Activated naive CD4-positive, alpha-beta T cell treated with anti-CD3 and anti-CD28 coated beads for 36 hours (primary cell): ENCODE measurements at regions of chr12 and their contacts with region 1.

Region 1: DNA sequence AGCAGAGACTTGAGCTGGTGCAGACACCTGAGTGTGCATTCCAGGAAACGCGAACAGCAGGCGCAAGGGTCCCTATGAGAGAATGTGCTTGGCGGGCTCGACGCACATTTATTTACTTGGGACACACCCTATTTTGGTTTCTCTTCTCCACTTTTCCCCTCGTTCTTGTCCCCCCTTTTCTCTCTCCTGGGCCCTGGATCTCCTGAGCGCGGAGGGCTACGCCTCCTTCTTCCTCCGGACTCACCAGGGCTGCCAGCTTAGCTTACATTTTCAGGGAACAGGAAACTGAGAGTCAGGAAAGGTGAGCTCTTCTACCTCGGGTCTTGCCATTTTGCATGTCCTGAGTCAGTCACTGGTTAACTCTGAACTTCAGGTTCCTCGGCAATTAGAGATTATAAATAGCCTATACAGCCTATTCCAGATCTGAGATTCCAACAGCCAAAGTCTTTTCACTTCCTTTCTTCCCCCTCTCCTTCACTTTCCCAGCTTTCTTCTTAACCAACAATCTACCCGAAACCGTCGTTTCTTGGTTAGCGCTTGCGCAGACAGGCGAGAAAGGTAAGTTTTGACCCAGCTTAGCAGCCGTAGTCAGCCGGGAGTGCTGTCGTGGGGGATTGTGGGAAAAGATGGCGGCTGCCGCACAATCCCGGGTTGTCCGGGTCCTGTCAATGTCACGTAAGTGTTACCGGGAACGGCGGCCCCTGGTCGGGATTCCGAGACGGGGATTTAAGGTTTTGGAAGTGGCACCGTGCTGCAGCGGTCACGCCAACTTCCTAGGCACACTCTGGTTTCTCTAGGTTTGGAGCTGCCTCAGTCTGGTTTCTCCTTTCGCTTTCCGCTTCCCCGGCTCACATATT is at the starts of genes AKAP3 and NDUFA9:
- DNase-seq: peak; percentile 90
- H3K4me3 Mint-ChIP-seq: peak within 1 kb of the TSS; percentile 98
- H3K27ac Mint-ChIP-seq: peak within 1 kb of the TSS; percentile 83
- H3K4me1 Mint-ChIP-seq: peaks cover 47% of the 10 kb centered on the region
- H3K27me3 Mint-ChIP-seq: no peaks in the 10 kb centered on the region
- total RNA-seq, gene AKAP3: 1.8 to 2.1 TPM
- total RNA-seq, gene NDUFA9: 150 to 160 TPM

Region 2: GRCh38 chr12:4320853-4321701 is 327.7 kb before region 1 on chr12 and contains the start of gene TIGAR:
- CTCF ChIA-PET with region 1: no interaction called
- intact Hi-C with region 1: loop called (anchors 2 kb)
- DNase-seq: peak; percentile 91
- H3K4me3 Mint-ChIP-seq: peak within 1 kb of the TSS; percentile 83
- H3K27ac Mint-ChIP-seq: peak within 1 kb of the TSS; percentile 87
- H3K4me1 Mint-ChIP-seq: peaks cover 34% of the 10 kb centered on the region
- H3K27me3 Mint-ChIP-seq: no peaks in the 10 kb centered on the region
- total RNA-seq, gene TIGAR: 10.3 to 12.8 TPM

Region 3: DNA sequence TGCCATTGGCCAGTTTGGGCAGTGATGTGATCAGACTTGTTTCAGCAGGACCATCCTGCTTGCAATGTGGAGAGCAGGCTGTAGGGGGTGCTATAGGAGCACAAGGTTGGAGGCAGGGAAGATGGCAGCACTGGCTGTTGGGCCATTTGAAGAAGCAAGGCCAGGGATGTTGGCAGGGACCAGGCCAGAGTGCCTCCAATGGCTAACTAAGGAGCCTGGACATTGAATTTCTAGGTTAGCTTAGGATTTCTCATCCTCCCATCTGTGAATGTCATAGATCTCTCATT is 292.7 kb before region 1 on chr12:
- CTCF ChIA-PET with region 1: no interaction called
- intact Hi-C with region 1: loop called (anchors 10 kb)
- DNase-seq: peak; percentile 85
- H3K4me3 Mint-ChIP-seq: no peak overlapping the region
- H3K27ac Mint-ChIP-seq: peak overlapping the region; percentile 46
- H3K4me1 Mint-ChIP-seq: no peaks in the 10 kb centered on the region
- H3K27me3 Mint-ChIP-seq: no peaks in the 10 kb centered on the region

Region 4: GRCh38 chr12:4538207-4539160 is 110.2 kb before region 1 on chr12 and contains the start of gene RAD51AP1:
- CTCF ChIA-PET with region 1: no interaction called
- intact Hi-C with region 1: loop called (anchors 1 kb)
- DNase-seq: peak; percentile 97
- H3K4me3 Mint-ChIP-seq: peak within 1 kb of the TSS; percentile 97
- H3K27ac Mint-ChIP-seq: peak within 1 kb of the TSS; percentile 98
- H3K4me1 Mint-ChIP-seq: peaks cover 25% of the 10 kb centered on the region
- H3K27me3 Mint-ChIP-seq: no peaks in the 10 kb centered on the region
- total RNA-seq, gene RAD51AP1: 69.5 to 76.5 TPM

Region 5: GRCh38 chr12:4604684-4605193 is 44.0 kb before region 1 on chr12:
- CTCF ChIA-PET with region 1: interaction called, 8 read pairs
- intact Hi-C with region 1: loop called (anchors 1 kb)
- DNase-seq: peak; percentile 92
- H3K4me3 Mint-ChIP-seq: peak overlapping the region; percentile 91
- H3K27ac Mint-ChIP-seq: peak overlapping the region; percentile 81
- H3K4me1 Mint-ChIP-seq: peaks cover 18% of the 10 kb centered on the region
- H3K27me3 Mint-ChIP-seq: peaks cover 8% of the 10 kb centered on the region

Region 6: GRCh38 chr12:4809013-4809448 is 160.3 kb after region 1 on chr12:
- CTCF ChIA-PET with region 1: no interaction called
- intact Hi-C with region 1: loop called (anchors 5 kb)
- DNase-seq: no peak
- H3K4me3 Mint-ChIP-seq: no peak overlapping the region
- H3K27ac Mint-ChIP-seq: no peak overlapping the region
- H3K4me1 Mint-ChIP-seq: peaks cover 27% of the 10 kb centered on the region
- H3K27me3 Mint-ChIP-seq: peaks cover 31% of the 10 kb centered on the region

Region 7: GRCh38 chr12:4829161-4829792 is 180.5 kb after region 1 on chr12:
- CTCF ChIA-PET with region 1: no interaction called
- intact Hi-C with region 1: loop called (anchors 5 kb)
- DNase-seq: peak; percentile 44
- H3K4me3 Mint-ChIP-seq: peak overlapping the region; percentile 64
- H3K27ac Mint-ChIP-seq: peak overlapping the region; percentile 87
- H3K4me1 Mint-ChIP-seq: peaks cover 59% of the 10 kb centered on the region
- H3K27me3 Mint-ChIP-seq: no peaks in the 10 kb centered on the region